ENCODE measurements at regions of chr2 and their contacts with region 1.

Region 1: GRCh38 chr2:169573160-169573973 is at the start of gene FASTKD1:
- DNase-seq: peak; percentile 95
- H3K4me3 Mint-ChIP-seq: peak within 1 kb of the TSS; percentile 96
- H3K27ac Mint-ChIP-seq: peak within 1 kb of the TSS; percentile 74
- H3K4me1 Mint-ChIP-seq: peaks cover 8% of the 10 kb centered on the region
- H3K27me3 Mint-ChIP-seq: no peaks in the 10 kb centered on the region
- CTCF ChIP-seq: no peak
- total RNA-seq, gene FASTKD1: 34.5 and 39.9 TPM in 2 replicates

Region 2: DNA sequence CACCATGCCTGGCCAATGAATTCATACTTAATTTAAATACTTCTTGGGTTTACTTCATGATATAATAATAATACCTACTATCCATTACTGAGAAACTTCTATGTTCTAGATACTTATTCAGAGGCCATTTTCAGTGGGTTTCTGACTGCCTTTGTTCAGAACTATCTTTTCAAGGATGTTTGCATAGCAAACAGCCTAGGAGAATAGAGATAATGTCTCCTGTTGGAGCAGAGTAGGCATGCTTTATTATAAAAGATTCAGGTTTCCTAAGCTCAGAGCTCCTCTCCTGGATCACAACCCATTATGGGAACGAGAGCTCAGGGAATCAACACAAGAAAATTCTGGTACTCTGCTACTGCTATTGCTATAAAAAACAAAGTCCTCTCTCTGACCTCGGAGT is 10.8 kb before region 1 on chr2:
- CTCF ChIA-PET with region 1: no interaction called
- POLR2A ChIA-PET with region 1: interaction called, 14 read pairs
- intact Hi-C with region 1: no loop called
- DNase-seq: no peak
- H3K4me3 Mint-ChIP-seq: no peak overlapping the region
- H3K27ac Mint-ChIP-seq: no peak overlapping the region
- H3K4me1 Mint-ChIP-seq: peaks cover 1% of the 10 kb centered on the region
- H3K27me3 Mint-ChIP-seq: no peaks in the 10 kb centered on the region
- CTCF ChIP-seq: no peak

Region 3: GRCh38 chr2:169584005-169584877 is 10.9 kb after region 1 on chr2 and contains the start of gene PPIG:
- CTCF ChIA-PET with region 1: interaction called, 5 read pairs
- POLR2A ChIA-PET with region 1: interaction called, 80 read pairs
- intact Hi-C with region 1: loop called (anchors 1 kb)
- DNase-seq: peak; percentile 91
- H3K4me3 Mint-ChIP-seq: peak within 1 kb of the TSS; percentile 99
- H3K27ac Mint-ChIP-seq: peak within 1 kb of the TSS; percentile 98
- H3K4me1 Mint-ChIP-seq: no peaks in the 10 kb centered on the region
- H3K27me3 Mint-ChIP-seq: no peaks in the 10 kb centered on the region
- CTCF ChIP-seq: no peak
- total RNA-seq, gene PPIG: 64.7 and 80.2 TPM in 2 replicates

Measured in MCF 10A (cell line).